ENCODE measurements at regions of chr5 and their contacts with region 1.

Region 1: DNA sequence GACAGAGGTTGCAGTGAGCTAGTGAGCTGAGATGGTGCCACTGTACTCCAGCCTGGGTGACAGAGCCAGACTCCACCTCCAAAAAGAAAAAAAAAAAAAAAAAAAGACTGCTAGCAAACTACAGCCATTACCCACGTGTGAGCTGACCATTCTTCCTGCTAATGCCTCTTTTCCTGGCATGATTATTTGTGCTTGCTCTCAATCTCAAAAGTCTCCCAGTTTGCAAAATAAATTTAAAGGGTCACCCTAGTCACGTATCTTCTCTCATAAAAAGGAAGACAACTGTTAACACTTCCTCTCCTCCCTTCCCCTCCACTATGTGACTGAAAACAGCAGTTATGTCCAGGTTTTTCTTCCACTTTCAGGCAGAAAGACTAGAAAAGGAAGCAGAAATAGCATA is 37.2 kb downstream of the TRIM36 start:
- DNase-seq: no peak
- H3K4me3 ChIP-seq: no peak overlapping the region
- H3K27ac ChIP-seq: no peak overlapping the region
- H3K4me1 ChIP-seq: no peaks in the 10 kb centered on the region
- H3K27me3 ChIP-seq: no peaks in the 10 kb centered on the region
- CTCF ChIP-seq: no peak

Region 2: GRCh38 chr5:115116001-115116400 is 16.5 kb before region 1 on chr5:
- CTCF ChIA-PET with region 1: interaction called, 14 read pairs
- dilution Hi-C with region 1: no loop called
- in situ Hi-C with region 1: no loop called
- intact Hi-C with region 1: no loop called
- DNase-seq: no peak
- H3K4me3 ChIP-seq: no peak overlapping the region
- H3K27ac ChIP-seq: no peak overlapping the region
- H3K4me1 ChIP-seq: no peaks in the 10 kb centered on the region
- H3K27me3 ChIP-seq: no peaks in the 10 kb centered on the region
- CTCF ChIP-seq: no peak

Measured in mammary epithelial cell (primary cell).